ENCODE measurements at regions of chr9 and their contacts with region 1.

Region 1: GRCh38 chr9:1337161-1337560 is 287.0 kb downstream of the DMRT2 start:
- DNase-seq: peak; percentile 96
- ATAC-seq: peak; percentile 97
- H3K4me3 ChIP-seq: no peak overlapping the region
- H3K27ac ChIP-seq: no peak overlapping the region
- H3K4me1 ChIP-seq: peaks cover 18% of the 10 kb centered on the region
- H3K27me3 ChIP-seq: no peaks in the 10 kb centered on the region
- CTCF ChIP-seq: peak; percentile 65

Region 2: GRCh38 chr9:893843-894420 is 443.2 kb before region 1 on chr9:
- CTCF ChIA-PET with region 1: no interaction called
- POLR2A ChIA-PET with region 1: no interaction called
- intact Hi-C with region 1: loop called (anchors 1 kb)
- DNase-seq: peak; percentile 71
- ATAC-seq: peak; percentile 88
- H3K4me3 ChIP-seq: peak overlapping the region; percentile 34; the same call in 1 of the 2 replicates
- H3K27ac ChIP-seq: no peak overlapping the region
- H3K4me1 ChIP-seq: no peaks in the 10 kb centered on the region
- H3K27me3 ChIP-seq: no peaks in the 10 kb centered on the region
- CTCF ChIP-seq: peak; percentile 82

Region 3: DNA sequence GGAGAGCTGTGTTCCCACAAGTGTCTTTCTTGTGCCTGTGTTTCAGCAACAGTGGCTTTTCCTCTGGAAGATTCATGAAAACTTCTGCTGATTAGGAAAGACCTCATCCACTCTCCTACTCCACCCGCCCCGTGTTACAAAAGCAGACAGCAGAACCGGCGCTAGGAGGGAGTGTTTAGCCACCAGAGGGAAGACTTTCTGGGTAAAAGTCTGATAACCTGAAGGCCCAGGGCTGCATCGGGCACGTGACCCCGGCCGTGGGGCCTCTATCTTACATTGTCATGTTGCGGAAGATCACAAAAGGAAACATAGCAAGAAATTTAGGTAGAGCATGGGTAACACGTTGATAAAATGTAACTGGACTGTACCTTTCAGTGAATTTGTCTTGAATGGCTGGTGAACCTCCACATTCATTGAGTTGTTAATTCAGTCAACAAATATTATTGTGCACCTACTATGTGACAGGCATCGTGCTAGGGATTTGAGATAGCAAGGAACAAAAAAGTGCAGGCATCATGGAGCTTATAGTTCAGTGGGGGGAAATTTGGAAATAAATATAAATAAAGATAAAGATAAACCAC is 318.9 kb before region 1 on chr9:
- CTCF ChIA-PET with region 1: no interaction called
- POLR2A ChIA-PET with region 1: no interaction called
- intact Hi-C with region 1: loop called (anchors 1 kb)
- DNase-seq: peak; percentile 63
- ATAC-seq: peak; percentile 85
- H3K4me3 ChIP-seq: no peak overlapping the region
- H3K27ac ChIP-seq: no peak overlapping the region
- H3K4me1 ChIP-seq: no peaks in the 10 kb centered on the region
- H3K27me3 ChIP-seq: no peaks in the 10 kb centered on the region
- CTCF ChIP-seq: peak; percentile 80

Region 4: DNA sequence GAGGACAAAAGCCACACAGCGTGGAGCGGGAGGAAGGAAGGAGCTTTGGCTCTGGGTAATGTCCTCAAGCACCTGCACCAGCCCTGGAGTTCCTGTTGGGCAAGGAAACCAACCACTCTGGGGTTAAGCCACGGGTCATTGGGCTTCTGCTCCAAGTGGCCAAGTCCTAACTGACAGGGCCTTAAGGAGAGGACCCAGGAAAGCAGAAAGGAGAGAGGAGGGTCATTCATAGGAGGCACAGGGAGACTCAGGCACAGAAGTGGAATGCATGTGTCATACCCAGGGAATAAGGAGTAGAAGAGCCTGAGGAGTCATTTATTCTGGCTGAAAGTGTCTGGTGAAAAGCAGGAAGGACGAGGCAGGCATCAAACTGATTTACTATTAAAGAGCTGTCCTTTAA is 157.8 kb before region 1 on chr9:
- CTCF ChIA-PET with region 1: no interaction called
- POLR2A ChIA-PET with region 1: no interaction called
- intact Hi-C with region 1: no loop called
- DNase-seq: no peak
- ATAC-seq: no peak
- H3K4me3 ChIP-seq: no peak overlapping the region
- H3K27ac ChIP-seq: no peak overlapping the region
- H3K4me1 ChIP-seq: no peaks in the 10 kb centered on the region
- H3K27me3 ChIP-seq: no peaks in the 10 kb centered on the region
- CTCF ChIP-seq: no peak

Region 5: GRCh38 chr9:1198089-1198488 is 139.1 kb before region 1 on chr9:
- CTCF ChIA-PET with region 1: no interaction called
- POLR2A ChIA-PET with region 1: no interaction called
- intact Hi-C with region 1: loop called (anchors 1 kb)
- DNase-seq: peak; percentile 88
- ATAC-seq: peak; percentile 72
- H3K4me3 ChIP-seq: no peak overlapping the region
- H3K27ac ChIP-seq: peak overlapping the region; percentile 53
- H3K4me1 ChIP-seq: peaks cover 15% of the 10 kb centered on the region
- H3K27me3 ChIP-seq: no peaks in the 10 kb centered on the region
- CTCF ChIP-seq: no peak

Measured in PC-3 (cell line).